GM12878 (cell line): ENCODE measurements at regions of chr2 and their contacts with region 1.

Region 1: GRCh38 chr2:54704688-54705605 is 18.5 kb upstream of the EML6 start:
- DNase-seq: no peak
- ATAC-seq: peak; percentile 78
- H3K4me3 ChIP-seq: no peak overlapping the region
- H3K27ac ChIP-seq: no peak overlapping the region
- H3K4me1 ChIP-seq: no peaks in the 10 kb centered on the region
- H3K27me3 ChIP-seq: peaks cover 0 to 5% of the 10 kb centered on the region in 2 experiments; a peak in 2 of 4 replicates
- CTCF ChIP-seq: peak; percentile 35 to 77 (median 47); a peak in 4 of 6 replicates
- EP300 ChIP-seq: no peak
- POLR2A ChIP-seq: no peak
- RAD21 ChIP-seq: peak; percentile 86

Region 2: DNA sequence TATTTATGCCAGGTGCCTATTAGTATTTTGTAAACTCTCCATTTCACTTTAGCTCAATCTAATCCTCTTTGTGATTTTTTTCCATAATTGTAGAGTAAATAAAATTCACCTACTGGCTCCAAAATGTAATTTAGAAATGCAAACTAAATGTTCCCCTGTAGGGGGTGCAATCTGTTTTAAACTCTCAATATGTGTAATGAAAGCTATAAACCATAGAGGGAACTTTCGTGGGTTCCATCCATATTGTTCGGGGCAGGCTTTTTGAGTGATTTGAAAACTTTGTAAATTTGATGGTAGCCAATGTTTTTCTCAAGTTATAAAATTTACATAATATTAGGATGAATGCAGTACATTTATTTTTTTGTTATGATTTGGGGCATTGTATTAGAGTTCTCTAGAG is 498.4 kb before region 1 on chr2:
- CTCF ChIA-PET with region 1: interaction called, 7 read pairs
- POLR2A ChIA-PET with region 1: no interaction called
- RAD21 ChIA-PET with region 1: interaction called, 5 read pairs
- SMC1A ChIA-PET with region 1: interaction called, 4 read pairs
- in situ Hi-C with region 1: no loop called
- intact Hi-C with region 1: loop called (anchors 5 kb)
- DNase-seq: no peak
- ATAC-seq: peak; percentile 80
- H3K4me3 ChIP-seq: no peak overlapping the region
- H3K27ac ChIP-seq: no peak overlapping the region
- H3K4me1 ChIP-seq: no peaks in the 10 kb centered on the region
- H3K27me3 ChIP-seq: no peaks in the 10 kb centered on the region
- CTCF ChIP-seq: peak; percentile 39 to 50 (median 45); a peak in 4 of 6 replicates
- EP300 ChIP-seq: no peak
- POLR2A ChIP-seq: no peak
- RAD21 ChIP-seq: peak; percentile 57

Region 3: GRCh38 chr2:54570925-54571694 is 133.8 kb before region 1 on chr2:
- CTCF ChIA-PET with region 1: interaction called, 6 read pairs
- POLR2A ChIA-PET with region 1: interaction called, 10 read pairs
- RAD21 ChIA-PET with region 1: interaction called, 4 read pairs
- SMC1A ChIA-PET with region 1: interaction called, 7 read pairs
- in situ Hi-C with region 1: no loop called
- intact Hi-C with region 1: no loop called
- DNase-seq: peak; percentile 98
- ATAC-seq: peak; percentile 55
- H3K4me3 ChIP-seq: peak overlapping the region; percentile 49; the same call in 1 of the 2 replicates
- H3K27ac ChIP-seq: peak overlapping the region; percentile 100
- H3K4me1 ChIP-seq: peaks cover 73% of the 10 kb centered on the region
- H3K27me3 ChIP-seq: no peaks in the 10 kb centered on the region
- CTCF ChIP-seq: no peak
- EP300 ChIP-seq: peak; percentile 80 to 96
- POLR2A ChIP-seq: peak; percentile 74
- RAD21 ChIP-seq: no peak; the same call in 1 of the 2 replicates

Region 4: GRCh38 chr2:54665436-54665856 is 39.5 kb before region 1 on chr2:
- CTCF ChIA-PET with region 1: interaction called, 225 read pairs
- POLR2A ChIA-PET with region 1: interaction called, 5 read pairs
- RAD21 ChIA-PET with region 1: interaction called, 135 read pairs
- SMC1A ChIA-PET with region 1: interaction called, 187 read pairs
- in situ Hi-C with region 1: no loop called
- intact Hi-C with region 1: loop called (anchors 1 kb)
- DNase-seq: no peak
- ATAC-seq: peak; percentile 80
- H3K4me3 ChIP-seq: no peak overlapping the region
- H3K27ac ChIP-seq: no peak overlapping the region
- H3K4me1 ChIP-seq: no peaks in the 10 kb centered on the region
- H3K27me3 ChIP-seq: no peaks in the 10 kb centered on the region
- CTCF ChIP-seq: peak; percentile 55 to 71 (median 71)
- EP300 ChIP-seq: no peak
- POLR2A ChIP-seq: no peak
- RAD21 ChIP-seq: peak; percentile 69

Region 5: GRCh38 chr2:54691445-54692135 is 13.4 kb before region 1 on chr2:
- CTCF ChIA-PET with region 1: interaction called, 40 read pairs
- POLR2A ChIA-PET with region 1: no interaction called
- RAD21 ChIA-PET with region 1: interaction called, 14 read pairs
- SMC1A ChIA-PET with region 1: interaction called, 34 read pairs
- in situ Hi-C with region 1: no loop called
- intact Hi-C with region 1: no loop called
- DNase-seq: no peak
- ATAC-seq: no peak
- H3K4me3 ChIP-seq: no peak overlapping the region
- H3K27ac ChIP-seq: no peak overlapping the region
- H3K4me1 ChIP-seq: no peaks in the 10 kb centered on the region; the same call in 1 of the 2 replicates
- H3K27me3 ChIP-seq: no peaks in the 10 kb centered on the region
- CTCF ChIP-seq: no peak
- EP300 ChIP-seq: no peak
- POLR2A ChIP-seq: no peak
- RAD21 ChIP-seq: no peak

Region 6: GRCh38 chr2:54924121-54924520 is 219.2 kb after region 1 on chr2:
- CTCF ChIA-PET with region 1: no interaction called
- POLR2A ChIA-PET with region 1: no interaction called
- RAD21 ChIA-PET with region 1: no interaction called
- SMC1A ChIA-PET with region 1: no interaction called
- in situ Hi-C with region 1: no loop called
- intact Hi-C with region 1: no loop called
- DNase-seq: no peak
- ATAC-seq: no peak
- H3K4me3 ChIP-seq: no peak overlapping the region
- H3K27ac ChIP-seq: no peak overlapping the region
- H3K4me1 ChIP-seq: no peaks in the 10 kb centered on the region
- H3K27me3 ChIP-seq: no peaks in the 10 kb centered on the region
- CTCF ChIP-seq: no peak
- EP300 ChIP-seq: no peak
- POLR2A ChIP-seq: no peak
- RAD21 ChIP-seq: no peak

Region 7: GRCh38 chr2:55099878-55100820 is 395.2 kb after region 1 on chr2:
- CTCF ChIA-PET with region 1: no interaction called
- POLR2A ChIA-PET with region 1: no interaction called
- RAD21 ChIA-PET with region 1: no interaction called
- SMC1A ChIA-PET with region 1: no interaction called
- in situ Hi-C with region 1: no loop called
- intact Hi-C with region 1: no loop called
- DNase-seq: no peak
- ATAC-seq: no peak
- H3K4me3 ChIP-seq: no peak overlapping the region
- H3K27ac ChIP-seq: no peak overlapping the region
- H3K4me1 ChIP-seq: no peaks in the 10 kb centered on the region
- H3K27me3 ChIP-seq: no peaks in the 10 kb centered on the region
- CTCF ChIP-seq: no peak
- EP300 ChIP-seq: no peak
- POLR2A ChIP-seq: no peak
- RAD21 ChIP-seq: no peak